Gastrocnemius medialis (tissue), 4 donors: ENCODE measurements at regions of chr11 and their contacts with region 1.

Region 1: GRCh38 chr11:16111690-16112089 is 244.7 kb downstream of the SOX6 start:
- DNase-seq: peak in 1 of 2 donors; percentile 20
- ATAC-seq: no peak
- H3K4me3 ChIP-seq: no peak overlapping the region
- H3K27ac ChIP-seq: peak overlapping the region in 2 of 4 donors; percentile 15 to 17
- H3K4me1 ChIP-seq: peaks cover 47 to 53% of the 10 kb centered on the region in 2 donors
- H3K27me3 ChIP-seq: no peaks in the 10 kb centered on the region
- CTCF ChIP-seq: no peak
- POLR2A ChIP-seq: no peak

Region 2: DNA sequence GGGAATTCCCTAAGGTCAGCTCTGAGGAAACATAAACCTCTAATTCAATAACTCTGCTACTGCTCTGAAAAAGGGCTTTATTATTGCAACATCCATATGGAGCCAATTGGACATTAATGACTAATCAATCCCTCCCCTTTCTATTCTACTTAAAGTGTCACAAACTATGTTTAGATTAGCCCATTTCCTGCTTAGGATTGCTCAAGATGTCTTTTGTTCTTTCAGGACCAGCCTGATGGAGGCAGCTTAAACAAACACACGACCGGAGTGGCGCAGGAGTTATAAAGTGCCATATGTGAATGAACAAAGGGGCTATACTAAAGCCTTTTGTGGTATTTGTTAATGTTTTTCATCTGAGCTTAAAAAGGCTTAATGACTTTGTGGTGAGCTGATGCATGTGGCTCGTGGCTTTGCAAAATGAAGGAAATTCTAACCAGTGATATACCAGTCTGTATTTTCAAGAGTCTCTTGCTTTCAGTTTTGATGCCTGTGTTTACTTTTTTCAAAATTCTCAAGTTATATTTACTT is 109.7 kb before region 1 on chr11:
- in situ Hi-C with region 1: loop called in 1 of 4 experiments (anchors 25 kb)
- intact Hi-C with region 1: no loop called
- DNase-seq: no peak
- ATAC-seq: peak in 1 of 2 donors; percentile 21
- H3K4me3 ChIP-seq: no peak overlapping the region
- H3K27ac ChIP-seq: no peak overlapping the region
- H3K4me1 ChIP-seq: peaks cover 0 to 13% of the 10 kb centered on the region in 2 donors
- H3K27me3 ChIP-seq: no peaks in the 10 kb centered on the region
- CTCF ChIP-seq: no peak
- POLR2A ChIP-seq: no peak

Region 3: DNA sequence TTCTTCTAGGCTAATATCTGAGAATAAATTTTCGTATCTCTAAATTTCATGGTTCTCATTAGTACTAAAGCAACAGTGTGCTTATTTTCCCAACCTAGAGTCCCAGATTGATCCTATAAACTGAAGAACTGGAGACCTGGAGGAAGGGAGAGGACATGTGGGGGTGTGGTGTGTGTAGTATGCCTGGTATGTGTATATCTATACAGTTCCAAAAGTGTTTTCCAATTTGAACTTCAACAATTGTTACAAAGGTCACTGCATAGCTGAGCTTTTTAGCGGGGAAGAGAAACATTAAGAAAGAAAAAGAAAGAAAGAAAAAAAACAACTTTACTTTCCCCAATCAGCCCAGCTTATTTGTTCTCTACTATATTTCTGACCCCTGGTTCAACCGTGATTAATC is 92.6 kb after region 1 on chr11:
- in situ Hi-C with region 1: loop called in 1 of 4 experiments (anchors 25 kb)
- intact Hi-C with region 1: no loop called
- DNase-seq: no peak
- ATAC-seq: no peak
- H3K4me3 ChIP-seq: no peak overlapping the region
- H3K27ac ChIP-seq: no peak overlapping the region
- H3K4me1 ChIP-seq: peaks cover 8 to 11% of the 10 kb centered on the region in 2 donors
- H3K27me3 ChIP-seq: no peaks in the 10 kb centered on the region
- CTCF ChIP-seq: no peak
- POLR2A ChIP-seq: no peak